ENCODE measurements at regions of chr7 and their contacts with region 1.

Region 1: GRCh38 chr7:151085691-151086620 is at the start of gene AGAP3:
- DNase-seq: peak; percentile 81 to 98 (median 86)

Region 2: DNA sequence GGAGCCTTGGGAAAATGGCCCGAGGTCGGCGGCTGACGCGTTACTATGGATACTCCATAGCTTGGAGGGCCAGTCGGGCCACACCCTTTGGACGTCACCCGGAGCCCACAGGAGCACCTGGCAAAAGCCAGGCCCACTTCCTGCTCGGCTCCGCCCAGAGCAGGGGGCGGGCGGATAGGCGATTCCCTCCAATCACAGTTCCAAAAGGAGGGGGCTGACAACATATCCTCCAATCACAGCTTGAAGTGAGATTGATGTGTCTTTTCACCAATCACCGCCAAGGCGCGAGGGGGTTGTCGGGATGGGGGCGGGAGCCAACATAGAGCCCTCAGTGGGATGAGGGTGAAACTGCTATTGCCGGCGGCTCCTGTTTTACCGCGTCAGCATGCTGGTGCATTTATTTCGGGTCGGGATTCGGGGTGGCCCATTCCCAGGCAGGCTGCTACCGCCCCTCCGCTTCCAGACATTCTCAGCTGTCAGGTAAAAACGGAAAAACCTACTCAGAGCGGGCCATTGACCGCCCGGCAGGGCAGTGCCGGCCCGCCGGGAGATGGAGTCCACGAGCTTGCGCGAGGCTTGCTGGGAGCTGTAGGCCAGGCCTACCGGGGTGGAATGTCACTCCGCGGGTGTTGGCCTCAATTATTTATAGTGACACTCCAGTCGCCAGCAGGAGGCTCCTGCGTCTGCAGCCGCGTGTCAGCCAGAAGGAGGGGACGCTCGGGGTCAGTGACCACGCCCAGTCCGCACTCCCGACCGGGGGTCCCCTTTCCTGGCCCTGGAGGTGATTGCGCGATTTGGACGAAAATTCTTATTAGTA is 57.6 kb before region 1 on chr7 and contains the start of gene ABCB8:
- intact Hi-C with region 1: loop called (anchors 2 kb)
- DNase-seq: peak; percentile 92 to 99 (median 96)

Region 3: GRCh38 chr7:151046603-151047504 is 39.1 kb before region 1 on chr7:
- intact Hi-C with region 1: no loop called
- DNase-seq: peak in 3 of 10 donors; percentile 62 to 84 (median 75)

Region 4: DNA sequence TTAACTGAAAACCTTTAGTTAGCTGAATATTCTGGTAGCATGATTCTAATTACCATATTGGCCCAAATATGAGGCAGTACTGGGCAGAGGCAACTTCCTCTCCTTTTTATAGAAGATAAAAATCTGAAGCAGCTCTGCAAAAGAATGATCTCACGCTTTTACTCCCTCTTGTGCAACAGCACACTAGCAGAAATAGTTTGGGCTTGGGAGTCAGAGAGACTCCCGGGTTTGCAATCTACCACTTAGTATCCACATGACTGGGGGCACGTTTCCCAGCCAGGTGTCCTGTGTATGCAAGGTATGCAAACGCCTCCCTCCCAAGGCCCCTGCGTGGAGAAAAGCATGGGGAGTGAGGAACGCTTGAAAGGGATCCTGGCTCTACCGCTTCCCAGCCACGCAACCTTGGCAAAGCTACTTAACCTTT is 481.0 kb after region 1 on chr7:
- intact Hi-C with region 1: no loop called
- DNase-seq: no peak